ENCODE measurements at regions of chr12 and their contacts with region 1.

Region 1: DNA sequence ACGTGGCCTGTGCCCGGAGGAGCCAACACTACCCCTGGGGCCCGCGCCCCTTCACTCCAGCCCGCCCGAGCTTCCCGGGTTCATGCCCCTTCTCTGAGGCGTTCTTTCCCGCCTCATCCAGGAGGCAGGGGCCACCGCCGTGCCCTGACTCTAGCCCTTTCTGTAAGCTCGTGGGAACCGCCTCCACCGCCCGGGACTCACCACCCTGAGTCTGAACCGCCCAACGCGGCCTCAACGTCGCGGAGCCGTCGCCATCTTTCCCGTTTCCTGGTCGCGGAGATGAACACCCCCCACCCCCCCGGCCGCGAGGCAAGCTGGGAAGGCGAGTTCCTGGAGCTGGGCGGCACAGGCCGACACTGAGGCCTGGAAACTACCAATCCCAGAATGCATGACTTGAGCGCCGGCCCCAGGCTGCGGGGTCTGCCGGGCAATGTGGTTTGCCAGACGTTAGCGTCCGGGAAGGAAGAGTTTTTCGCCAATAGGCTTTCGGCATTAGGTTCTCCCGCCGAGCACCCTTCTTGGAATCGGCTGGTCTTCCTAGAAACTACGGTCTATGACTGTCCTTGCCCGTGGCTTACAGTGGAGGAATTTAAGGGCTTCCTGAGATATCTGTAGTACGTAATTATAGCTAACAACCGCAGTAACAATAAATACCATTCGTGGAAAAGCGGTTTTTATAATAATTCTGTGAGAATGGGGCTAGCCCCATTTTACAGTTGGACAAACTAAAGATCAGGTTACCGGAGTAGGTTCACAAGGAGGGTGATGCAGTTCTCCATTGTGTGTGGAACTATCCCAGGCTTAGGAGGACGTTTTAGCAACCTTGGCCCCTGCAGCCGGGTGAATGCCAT is at the start of gene DDX23:
- DNase-seq: peak; percentile 97
- H3K4me3 ChIP-seq: peak within 1 kb of the TSS; percentile 85 to 92
- H3K27ac ChIP-seq: peak within 1 kb of the TSS; percentile 61 to 85
- H3K4me1 ChIP-seq: peaks cover 0 to 13% of the 10 kb centered on the region in 2 experiments; a peak in 2 of 4 replicates
- H3K27me3 ChIP-seq: no peaks in the 10 kb centered on the region
- CTCF ChIP-seq: no peak
- EP300 ChIP-seq: peak in 1 of 2 experiments; percentile 25; a peak in 1 of 4 replicates
- RAD21 ChIP-seq: no peak
- polyA plus RNA-seq, gene DDX23: 50.4 and 52.5 TPM in 2 replicates

Region 2: GRCh38 chr12:48826209-48826894 is 25.8 kb before region 1 on chr12:
- CTCF ChIA-PET with region 1: interaction called, 16 read pairs
- POLR2A ChIA-PET with region 1: interaction called, 3 read pairs
- DNase-seq: no peak
- H3K4me3 ChIP-seq: no peak overlapping the region
- H3K27ac ChIP-seq: no peak overlapping the region
- H3K4me1 ChIP-seq: no peaks in the 10 kb centered on the region; a peak in 1 of 4 replicates
- H3K27me3 ChIP-seq: no peaks in the 10 kb centered on the region
- CTCF ChIP-seq: no peak
- EP300 ChIP-seq: no peak
- RAD21 ChIP-seq: no peak

Region 3: DNA sequence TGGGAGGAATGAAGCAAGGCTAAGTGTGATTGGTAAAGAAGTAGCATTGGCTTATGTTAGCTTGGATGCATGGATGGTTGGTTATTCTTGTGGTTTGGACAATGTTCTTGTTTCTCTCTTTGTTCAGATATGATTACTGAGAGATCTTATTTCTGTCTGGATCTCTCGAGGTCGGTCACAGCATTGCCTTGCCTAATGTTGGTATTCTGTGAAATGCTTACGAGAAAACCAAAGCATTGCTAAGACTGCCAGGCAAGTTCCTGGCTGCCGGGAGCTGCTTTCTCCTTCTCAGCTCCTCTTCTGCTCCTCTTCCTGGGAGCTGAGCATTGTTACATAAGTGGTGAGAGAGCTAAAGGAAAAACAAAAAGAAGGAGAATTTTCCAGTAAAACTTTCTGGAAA is 21.0 kb after region 1 on chr12:
- CTCF ChIA-PET with region 1: interaction called, 667 read pairs
- POLR2A ChIA-PET with region 1: no interaction called
- DNase-seq: no peak
- H3K4me3 ChIP-seq: no peak overlapping the region
- H3K27ac ChIP-seq: no peak overlapping the region
- H3K4me1 ChIP-seq: no peaks in the 10 kb centered on the region; a peak in 1 of 4 replicates
- H3K27me3 ChIP-seq: no peaks in the 10 kb centered on the region; the same call in 1 of the 2 replicates
- CTCF ChIP-seq: no peak
- EP300 ChIP-seq: no peak
- RAD21 ChIP-seq: no peak

Region 4: DNA sequence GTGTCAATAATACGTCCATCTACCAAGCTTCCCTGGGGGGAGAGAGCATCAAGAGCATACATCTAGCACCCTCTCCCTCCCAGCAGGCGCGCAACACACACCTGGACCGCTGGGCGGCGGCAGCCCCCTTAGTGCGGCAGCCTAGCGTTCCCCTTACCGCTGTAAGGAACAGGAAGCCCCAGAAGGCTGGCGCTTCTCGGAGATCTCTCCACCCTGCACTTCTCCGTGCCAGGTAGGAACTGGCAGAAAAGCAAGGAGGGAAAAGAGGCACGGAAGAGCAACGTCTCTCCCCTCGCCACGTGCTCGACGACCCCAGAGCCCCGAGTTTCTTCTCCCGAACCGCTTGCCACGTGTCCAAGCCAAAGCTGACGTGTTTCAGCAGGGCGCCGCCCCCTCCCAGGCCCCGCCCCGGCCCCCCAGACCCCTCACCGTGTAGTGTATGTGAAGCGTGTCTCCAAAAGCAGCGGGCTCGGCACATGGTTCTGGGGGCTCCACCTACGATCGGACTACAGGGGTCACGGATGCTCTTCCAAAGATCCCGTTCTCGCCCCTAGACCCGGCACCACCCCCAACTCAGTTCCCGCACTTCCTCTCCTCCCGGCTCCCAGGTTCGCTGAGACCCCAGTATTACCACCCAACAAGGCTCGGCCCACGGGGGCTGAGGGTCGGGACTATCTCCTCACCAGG is 72.7 kb after region 1 on chr12:
- CTCF ChIA-PET with region 1: interaction called, 26 read pairs
- POLR2A ChIA-PET with region 1: no interaction called
- DNase-seq: peak; percentile 77
- H3K4me3 ChIP-seq: peak overlapping the region; percentile 52 to 57; a peak in 3 of 4 replicates
- H3K27ac ChIP-seq: no peak overlapping the region
- H3K4me1 ChIP-seq: no peaks in the 10 kb centered on the region; a peak in 1 of 4 replicates
- H3K27me3 ChIP-seq: no peaks in the 10 kb centered on the region
- CTCF ChIP-seq: peak; percentile 36
- EP300 ChIP-seq: no peak
- RAD21 ChIP-seq: peak; percentile 44

Region 5: DNA sequence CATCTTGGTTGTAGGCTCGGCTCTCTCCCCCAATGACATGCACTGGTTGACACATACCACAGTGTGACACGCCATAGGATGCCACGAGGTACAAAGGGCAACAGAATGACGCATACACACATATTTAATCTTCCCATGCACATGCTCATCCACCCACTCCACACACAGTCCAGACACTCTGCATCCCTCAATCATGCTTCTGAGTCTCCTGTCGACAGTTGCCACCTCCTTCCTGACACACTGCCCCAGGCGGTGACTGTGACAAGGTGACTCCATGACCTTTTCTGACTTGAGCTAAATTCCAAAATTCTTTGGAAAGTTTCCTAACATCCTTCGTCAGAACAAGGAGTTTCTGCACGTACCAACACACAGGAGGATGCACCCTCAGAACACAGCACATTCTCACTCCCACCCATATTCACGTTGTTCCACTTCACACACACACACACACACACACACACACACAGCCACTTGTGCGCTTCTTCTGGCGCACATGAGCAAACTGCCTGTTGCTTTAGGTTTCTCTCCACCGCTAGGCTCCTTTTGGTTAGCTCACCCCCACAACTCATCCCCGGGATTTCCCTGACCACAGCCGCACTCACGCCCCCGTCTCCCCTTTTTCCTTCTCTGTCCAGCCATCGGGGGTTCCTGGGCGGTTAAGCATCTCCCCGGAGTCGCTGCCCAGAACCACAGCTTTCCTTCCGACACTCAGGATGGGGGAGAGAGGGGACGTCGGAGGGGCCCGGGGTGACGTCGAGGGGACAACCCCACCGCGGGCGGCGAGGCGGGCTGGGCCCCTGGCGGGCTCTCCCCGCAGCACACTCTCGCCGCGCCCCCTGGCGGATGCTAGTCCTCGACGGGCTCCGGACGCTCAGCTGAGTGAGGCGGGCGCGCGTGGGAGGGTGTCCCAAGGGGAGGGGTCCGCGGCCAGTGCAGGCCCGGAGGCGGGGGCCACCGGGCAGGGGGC is 125.5 kb after region 1 on chr12:
- CTCF ChIA-PET with region 1: interaction called, 59 read pairs
- POLR2A ChIA-PET with region 1: no interaction called
- DNase-seq: peak; percentile 91
- H3K4me3 ChIP-seq: peak overlapping the region in 1 of 2 experiments; percentile 32; a peak in 1 of 4 replicates
- H3K27ac ChIP-seq: no peak overlapping the region
- H3K4me1 ChIP-seq: peaks cover 0 to 26% of the 10 kb centered on the region in 2 experiments; a peak in 1 of 4 replicates
- H3K27me3 ChIP-seq: peaks cover 66% of the 10 kb centered on the region
- CTCF ChIP-seq: peak; percentile 70
- EP300 ChIP-seq: no peak
- RAD21 ChIP-seq: peak; percentile 29; the same call in 1 of the 2 replicates

Region 6: DNA sequence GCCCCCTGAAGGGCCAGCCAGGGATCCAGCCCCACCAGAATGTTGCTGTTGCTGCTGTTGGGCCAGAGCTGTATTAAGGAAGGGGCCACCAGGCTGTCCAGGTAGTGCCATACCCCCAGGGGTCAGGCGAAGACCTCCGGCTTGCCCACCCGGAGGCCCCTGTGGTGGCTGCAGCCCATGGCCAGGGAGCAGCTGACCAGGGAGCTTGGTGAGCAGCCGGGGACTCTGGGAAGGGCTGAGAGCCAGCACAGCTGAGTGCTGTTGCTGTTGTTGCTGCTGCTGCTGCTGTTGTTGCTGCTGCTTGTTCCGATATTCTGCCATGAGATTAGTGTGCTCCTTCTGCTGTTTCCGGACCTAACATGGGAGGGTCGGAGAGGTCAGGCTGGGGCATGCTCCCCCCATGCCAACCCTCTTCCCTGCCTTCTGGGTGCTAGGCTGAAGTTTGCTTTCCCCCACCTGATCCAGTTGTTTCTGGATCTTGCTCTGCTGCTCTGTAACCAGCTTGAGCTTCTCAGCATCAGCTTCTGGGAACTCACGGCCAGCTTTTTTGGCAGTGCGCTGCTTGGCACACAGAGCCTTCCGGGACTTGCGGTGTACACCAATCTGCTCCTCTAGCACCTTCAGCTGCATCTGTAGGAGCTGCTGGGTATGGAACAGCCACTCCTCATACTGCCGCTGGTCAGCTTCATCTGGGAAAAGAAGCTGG is 181.7 kb after region 1 on chr12:
- CTCF ChIA-PET with region 1: no interaction called
- POLR2A ChIA-PET with region 1: no interaction called
- DNase-seq: no peak
- H3K4me3 ChIP-seq: no peak overlapping the region
- H3K27ac ChIP-seq: no peak overlapping the region
- H3K4me1 ChIP-seq: no peaks in the 10 kb centered on the region
- H3K27me3 ChIP-seq: no peaks in the 10 kb centered on the region
- CTCF ChIP-seq: no peak
- EP300 ChIP-seq: no peak
- RAD21 ChIP-seq: no peak